ENCODE measurements at regions of chr1 and their contacts with region 1.

Region 1: DNA sequence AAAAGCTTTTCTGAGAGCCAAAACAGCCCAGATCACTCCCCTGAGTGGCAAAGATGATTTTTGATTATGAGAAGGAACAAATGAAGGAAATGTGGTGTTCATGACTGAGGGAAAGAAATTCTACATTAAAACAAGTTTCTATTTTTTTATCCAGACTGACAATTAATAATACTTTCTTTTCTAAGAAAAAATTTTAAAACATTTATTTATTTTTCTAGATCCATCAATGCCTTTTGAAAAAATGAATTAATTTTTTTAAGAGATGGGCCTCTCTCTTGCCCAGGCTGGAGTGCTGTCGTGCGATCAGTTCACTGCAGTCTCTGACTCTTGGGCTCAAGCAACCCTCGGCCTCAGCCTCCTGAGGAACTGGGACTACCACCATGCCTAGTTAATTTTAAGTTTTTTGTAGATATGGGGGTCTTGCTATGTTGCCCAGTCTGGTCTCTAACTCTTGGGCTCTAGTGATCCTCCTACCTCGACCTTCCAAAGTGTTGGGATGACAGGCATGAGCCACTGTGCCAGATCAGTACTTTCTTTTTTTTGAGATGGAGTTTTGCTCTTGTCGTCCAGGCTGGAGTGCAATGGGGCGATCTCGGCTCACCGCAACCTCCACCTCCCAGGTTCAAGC is 11.2 kb upstream of the TXNIP start:
- DNase-seq: no peak
- ATAC-seq: no peak
- H3K4me3 ChIP-seq: no peak overlapping the region
- H3K27ac ChIP-seq: no peak overlapping the region
- H3K4me1 ChIP-seq: peaks cover 3% of the 10 kb centered on the region; the same call in 1 of the 3 replicates
- CTCF ChIP-seq: peak; percentile 3; the same call in 1 of the 3 replicates
- EP300 ChIP-seq: no peak
- POLR2A ChIP-seq: no peak
- RAD21 ChIP-seq: no peak

Region 2: GRCh38 chr1:145706086-145706680 is 301.4 kb before region 1 on chr1:
- CTCF ChIA-PET with region 1: no interaction called
- POLR2A ChIA-PET with region 1: no interaction called
- DNase-seq: peak; percentile 55 to 84
- ATAC-seq: peak; percentile 79 to 81
- H3K4me3 ChIP-seq: no peak overlapping the region
- H3K27ac ChIP-seq: peak overlapping the region; percentile 56 to 78; a peak in 5 of 6 replicates
- H3K4me1 ChIP-seq: peaks cover 40% of the 10 kb centered on the region
- CTCF ChIP-seq: no peak
- EP300 ChIP-seq: no peak
- POLR2A ChIP-seq: no peak
- RAD21 ChIP-seq: no peak

Region 3: DNA sequence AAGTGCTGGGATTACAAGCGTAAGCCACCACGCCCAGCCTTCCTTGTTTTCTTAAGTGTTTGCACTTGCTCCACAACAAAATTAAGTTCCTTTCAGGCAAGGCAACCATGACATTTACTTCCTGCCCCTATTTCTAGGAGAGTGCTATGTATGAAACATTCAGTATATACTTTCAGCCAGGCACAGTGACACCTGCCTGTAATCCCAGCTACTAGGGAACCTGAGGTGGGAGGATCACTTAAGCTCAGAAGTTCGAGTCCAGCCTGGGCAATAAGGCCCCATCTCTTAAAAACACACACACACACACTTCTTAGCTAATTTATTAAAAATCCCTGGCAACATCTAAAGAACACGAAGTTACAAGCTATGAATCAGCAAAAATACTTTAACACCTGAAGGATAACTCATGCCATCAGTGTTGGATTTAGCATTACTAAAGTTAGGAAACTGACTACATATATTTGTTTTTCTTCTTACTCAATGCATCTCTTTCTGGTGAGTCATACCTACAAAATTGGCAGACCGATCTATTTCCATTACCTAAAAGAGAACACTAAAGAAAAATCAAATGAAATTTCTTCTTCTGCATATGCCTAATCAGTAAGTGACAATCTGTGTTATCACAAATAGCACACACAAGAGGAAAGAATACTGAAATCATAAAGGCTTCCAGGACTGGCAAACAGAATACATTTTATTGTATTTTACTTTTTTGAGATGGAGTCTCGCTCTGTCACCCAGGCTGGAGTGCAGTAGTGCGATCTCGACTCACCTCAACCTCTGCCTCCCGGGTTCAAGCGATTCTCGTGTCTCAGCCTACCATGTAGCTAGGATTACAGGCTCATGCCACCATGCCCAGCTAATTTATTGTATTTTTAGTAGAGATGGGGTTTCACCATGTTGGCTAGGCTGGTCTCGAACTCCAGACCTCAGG is 225.2 kb before region 1 on chr1:
- CTCF ChIA-PET with region 1: no interaction called
- POLR2A ChIA-PET with region 1: no interaction called
- DNase-seq: peak; percentile 35 to 82
- ATAC-seq: peak; percentile 73 to 80
- H3K4me3 ChIP-seq: no peak overlapping the region
- H3K27ac ChIP-seq: peak overlapping the region; percentile 75 to 82
- H3K4me1 ChIP-seq: peaks cover 84% of the 10 kb centered on the region
- CTCF ChIP-seq: no peak
- EP300 ChIP-seq: peak; percentile 55 to 66; a peak in 2 of 5 replicates
- POLR2A ChIP-seq: no peak
- RAD21 ChIP-seq: no peak

Region 4: DNA sequence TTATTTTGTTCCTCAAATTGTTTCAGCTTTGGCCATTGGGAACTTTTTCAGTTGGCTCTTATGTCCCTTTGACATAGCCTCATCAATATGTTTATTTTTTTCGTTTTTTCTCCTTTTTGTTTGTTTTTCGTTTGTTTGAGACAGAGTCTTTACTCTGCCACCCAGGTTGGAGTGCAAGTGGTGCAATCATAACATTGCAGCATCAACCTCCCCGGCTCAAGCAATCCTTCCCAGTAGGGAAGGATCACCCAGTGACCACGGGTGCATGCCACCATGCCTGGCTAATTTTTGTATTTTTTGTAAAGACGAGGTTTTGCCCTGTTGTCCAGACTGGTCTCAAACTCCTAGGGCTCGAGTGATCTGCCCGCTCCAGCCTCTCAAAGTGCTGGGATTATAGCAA is 35.0 kb before region 1 on chr1:
- CTCF ChIA-PET with region 1: interaction called, 566 read pairs
- POLR2A ChIA-PET with region 1: no interaction called
- DNase-seq: peak in 1 of 2 experiments; percentile 42
- ATAC-seq: peak; percentile 55 to 58; a peak in 3 of 6 replicates
- H3K4me3 ChIP-seq: no peak overlapping the region
- H3K27ac ChIP-seq: peak overlapping the region; percentile 9 to 17; a peak in 1 of 6 replicates
- H3K4me1 ChIP-seq: peaks cover 10% of the 10 kb centered on the region; the same call in 1 of the 3 replicates
- CTCF ChIP-seq: no peak
- EP300 ChIP-seq: no peak
- POLR2A ChIP-seq: no peak
- RAD21 ChIP-seq: no peak

Region 5: DNA sequence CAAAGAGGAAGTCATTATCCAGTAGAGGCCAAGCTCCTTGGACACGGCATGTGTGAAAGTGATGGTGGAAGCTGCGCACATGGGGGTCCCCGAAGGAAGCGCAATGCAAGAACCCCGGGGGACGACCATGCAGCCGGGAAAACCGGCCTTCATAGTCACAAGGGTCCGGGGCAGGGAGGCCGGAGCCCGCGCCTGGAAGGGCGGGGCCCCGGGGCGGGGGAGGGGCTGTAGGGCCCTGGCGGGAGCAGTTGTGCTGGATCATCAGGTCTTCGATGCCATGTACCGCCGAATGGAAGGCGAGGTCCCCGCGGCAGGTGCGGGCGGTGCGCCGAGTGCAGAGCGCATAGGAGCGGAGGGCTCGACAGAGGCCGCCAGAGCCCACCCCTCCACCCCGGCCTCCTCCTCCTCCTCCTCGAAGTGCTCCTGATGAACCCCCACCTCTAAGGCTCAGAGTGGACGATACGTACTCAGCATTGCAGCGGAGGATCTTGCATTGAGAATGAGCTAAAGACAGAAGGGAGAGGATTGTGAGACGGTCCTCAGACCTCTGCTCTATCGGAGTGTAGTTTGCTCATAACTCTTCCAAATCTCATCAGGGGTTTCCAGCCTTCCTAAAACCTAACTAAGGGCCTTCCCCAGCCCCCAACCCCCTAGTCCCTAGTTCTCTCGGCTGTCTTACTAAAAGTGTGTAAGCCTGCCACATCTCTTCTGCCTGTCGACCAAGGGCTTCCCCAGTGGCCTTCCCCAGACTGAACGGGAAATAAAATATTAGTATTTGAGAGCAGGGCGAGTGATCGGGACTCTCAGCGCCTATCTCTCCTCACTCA is 11.8 kb after region 1 on chr1:
- CTCF ChIA-PET with region 1: interaction called, 21 read pairs
- POLR2A ChIA-PET with region 1: no interaction called
- DNase-seq: no peak
- ATAC-seq: no peak
- H3K4me3 ChIP-seq: no peak overlapping the region
- H3K27ac ChIP-seq: no peak overlapping the region
- H3K4me1 ChIP-seq: peaks cover 14% of the 10 kb centered on the region
- CTCF ChIP-seq: no peak
- EP300 ChIP-seq: no peak
- POLR2A ChIP-seq: no peak
- RAD21 ChIP-seq: no peak

Measured in A549 (cell line).